Heart right ventricle (tissue), 16 donors: ENCODE measurements at regions of chr1 and their contacts with region 1.

Region 1: DNA sequence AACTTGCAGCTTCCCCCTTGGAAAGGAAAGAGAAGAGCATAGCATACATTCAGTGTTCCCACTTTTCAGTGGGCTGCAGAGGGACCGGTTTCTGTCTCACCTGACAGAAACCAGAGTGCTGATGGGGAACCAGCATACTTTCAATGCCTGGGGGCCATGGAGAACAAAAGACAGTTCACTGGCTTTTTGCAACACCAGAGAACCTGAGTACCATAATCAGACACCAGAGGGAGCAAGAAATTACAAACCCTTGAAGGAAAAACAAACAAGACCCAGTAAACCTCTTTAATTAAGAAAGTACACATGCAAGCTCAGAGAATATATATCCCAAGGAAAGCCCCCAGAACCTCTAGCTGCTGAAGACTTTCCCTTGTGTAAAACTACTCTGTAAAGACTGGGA is 51.1 kb downstream of the CSMD2 start:
- DNase-seq: no peak
- ATAC-seq: no peak
- H3K4me3 ChIP-seq: no peak overlapping the region
- H3K27ac ChIP-seq: no peak overlapping the region
- H3K4me1 ChIP-seq: no peaks in the 10 kb centered on the region
- H3K27me3 ChIP-seq: peaks cover 0 to 4% (median 0%) of the 10 kb centered on the region in 7 donors
- CTCF ChIP-seq: peak in 6 of 9 donors; percentile 9 to 36 (median 30)

Region 2: GRCh38 chr1:33735621-33736020 is 378.3 kb before region 1 on chr1:
- intact Hi-C with region 1: loop called in 3 of 10 experiments (anchors 5 to 10 kb)
- DNase-seq: no peak
- ATAC-seq: peak in 1 of 8 donors; percentile 12
- H3K4me3 ChIP-seq: no peak overlapping the region
- H3K27ac ChIP-seq: no peak overlapping the region
- H3K4me1 ChIP-seq: no peaks in the 10 kb centered on the region
- H3K27me3 ChIP-seq: peaks cover 0 to 34% (median 19%) of the 10 kb centered on the region in 7 donors
- CTCF ChIP-seq: peak in 7 of 9 donors; percentile 24 to 51 (median 45)

Region 3: GRCh38 chr1:33876970-33877650 is 236.8 kb before region 1 on chr1:
- intact Hi-C with region 1: loop called in 3 of 10 experiments (anchors 5 to 10 kb)
- DNase-seq: peak; percentile 21 to 23
- ATAC-seq: peak in 5 of 8 donors; percentile 23 to 86 (median 37)
- H3K4me3 ChIP-seq: no peak overlapping the region
- H3K27ac ChIP-seq: peak overlapping the region in 4 of 10 donors; percentile 1 to 27 (median 16)
- H3K4me1 ChIP-seq: peaks cover 0 to 7% (median 0%) of the 10 kb centered on the region in 9 donors
- H3K27me3 ChIP-seq: peaks cover 0 to 13% (median 0%) of the 10 kb centered on the region in 7 donors
- CTCF ChIP-seq: no peak

Region 4: GRCh38 chr1:34066981-34067603 is 46.8 kb before region 1 on chr1:
- intact Hi-C with region 1: no loop called
- DNase-seq: no peak
- ATAC-seq: no peak
- H3K4me3 ChIP-seq: no peak overlapping the region
- H3K27ac ChIP-seq: no peak overlapping the region
- H3K4me1 ChIP-seq: peaks cover 0 to 6% (median 0%) of the 10 kb centered on the region in 9 donors
- H3K27me3 ChIP-seq: peaks cover 0 to 12% (median 4%) of the 10 kb centered on the region in 7 donors
- CTCF ChIP-seq: no peak

Region 5: DNA sequence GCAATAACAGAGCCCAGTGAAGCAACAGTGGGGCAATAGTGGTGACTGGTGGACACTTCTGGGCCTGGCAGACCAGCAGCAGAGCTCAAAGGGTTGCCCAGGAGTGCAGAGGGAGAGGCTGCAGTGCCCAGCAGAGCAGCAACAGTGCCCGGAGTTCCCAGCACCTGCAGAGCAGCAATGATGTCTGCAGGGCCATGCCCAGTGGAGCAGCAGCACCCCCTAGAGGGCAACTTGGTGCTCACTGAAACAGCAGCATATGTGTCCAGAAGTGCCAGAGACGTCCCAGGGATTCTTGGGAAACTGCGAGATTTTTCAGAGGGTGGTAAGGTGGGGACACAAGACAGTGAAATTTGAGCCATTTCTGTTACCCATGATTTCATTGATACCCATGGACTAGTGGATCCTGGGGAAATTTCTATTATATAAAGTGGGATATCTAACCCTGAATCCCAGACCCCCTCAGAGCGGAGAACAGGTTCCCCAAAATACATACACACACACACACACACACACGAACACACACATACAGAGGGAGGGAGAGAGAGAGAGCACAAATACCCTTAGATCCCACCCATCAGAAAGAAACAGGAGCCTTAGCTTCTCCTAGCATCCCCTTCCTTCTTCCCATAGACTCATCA is 484.1 kb after region 1 on chr1:
- intact Hi-C with region 1: loop called in 6 of 10 experiments (anchors 5 to 10 kb)
- DNase-seq: peak; percentile 29 to 54
- ATAC-seq: peak in 6 of 8 donors; percentile 49 to 75 (median 62)
- H3K4me3 ChIP-seq: no peak overlapping the region
- H3K27ac ChIP-seq: no peak overlapping the region
- H3K4me1 ChIP-seq: no peaks in the 10 kb centered on the region
- H3K27me3 ChIP-seq: peaks cover 0 to 47% (median 24%) of the 10 kb centered on the region in 7 donors
- CTCF ChIP-seq: peak; percentile 33 to 75 (median 69)

Region 6: DNA sequence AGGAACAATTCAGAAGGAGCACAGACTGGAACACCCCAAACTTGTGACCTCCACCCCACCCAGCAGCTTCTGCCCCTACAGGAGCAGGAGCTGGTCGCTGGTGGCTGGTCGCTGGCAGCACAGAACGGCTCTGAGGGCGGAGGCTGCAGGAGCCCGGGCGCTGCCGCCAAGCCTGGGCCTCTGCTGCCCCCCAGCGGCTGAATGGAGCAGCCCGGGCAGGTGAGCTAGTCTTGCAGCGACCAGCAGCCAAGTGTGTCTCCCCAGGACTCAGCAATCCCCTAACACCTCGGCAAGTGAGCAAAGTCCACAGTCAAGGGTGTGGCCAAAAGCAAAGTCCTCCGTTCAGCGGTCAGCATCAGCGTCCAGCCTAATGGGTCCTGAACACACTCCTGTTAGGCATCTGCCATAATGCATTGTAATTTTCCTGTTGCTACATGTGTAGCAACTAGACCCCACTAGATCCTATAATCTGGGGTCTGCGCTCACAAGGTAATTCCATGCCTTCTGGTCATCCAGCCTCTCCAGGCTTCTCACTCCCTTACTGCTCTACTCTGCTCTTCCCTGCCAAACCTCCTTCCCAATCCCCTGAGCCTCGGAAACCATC is 628.9 kb after region 1 on chr1:
- intact Hi-C with region 1: loop called in 4 of 10 experiments (anchors 5 to 10 kb)
- DNase-seq: peak; percentile 65 to 80
- ATAC-seq: peak; percentile 82 to 92 (median 88)
- H3K4me3 ChIP-seq: no peak overlapping the region
- H3K27ac ChIP-seq: no peak overlapping the region
- H3K4me1 ChIP-seq: peaks cover 0 to 4% (median 0%) of the 10 kb centered on the region in 9 donors
- H3K27me3 ChIP-seq: peaks cover 0 to 42% (median 23%) of the 10 kb centered on the region in 7 donors
- CTCF ChIP-seq: peak; percentile 89 to 97 (median 95)